ENCODE measurements at regions of chr4 and their contacts with region 1.

Region 1: DNA sequence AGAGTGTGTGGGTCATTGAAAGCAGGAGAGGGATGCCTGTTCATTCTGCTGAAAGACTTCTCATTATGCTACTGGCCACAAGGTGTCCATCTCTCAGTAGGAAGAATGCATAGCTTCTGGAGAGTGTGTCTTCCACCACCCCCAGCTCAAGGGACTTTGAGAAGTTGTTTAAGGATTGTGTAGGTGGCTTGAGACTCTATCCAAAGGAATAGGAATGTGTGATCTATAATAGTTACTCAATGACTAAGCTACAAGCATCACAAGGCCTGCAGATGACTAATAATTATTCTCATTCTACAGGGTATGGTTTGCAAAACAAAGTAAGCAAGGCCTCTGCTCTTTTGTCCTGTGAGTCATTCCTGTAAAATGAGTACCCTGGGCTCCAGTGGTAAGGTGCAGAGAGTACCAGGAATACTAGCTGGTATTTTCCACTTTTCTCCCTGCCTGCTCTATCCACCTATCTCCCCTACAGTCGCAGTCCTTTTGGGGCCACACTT is 279.8 kb upstream of the BOD1L1 start:
- DNase-seq: no peak
- ATAC-seq: peak; percentile 29
- H3K4me3 ChIP-seq: no peak overlapping the region
- H3K27ac ChIP-seq: peak overlapping the region in 1 of 2 donors; percentile 94
- H3K4me1 ChIP-seq: peaks cover 0 to 2% of the 10 kb centered on the region in 2 donors
- H3K27me3 ChIP-seq: no peaks in the 10 kb centered on the region

Region 2: GRCh38 chr4:13988353-13989305 is 81.3 kb after region 1 on chr4:
- intact Hi-C with region 1: loop called in 1 of 2 experiments (anchors 5 kb)
- DNase-seq: peak; percentile 72 to 79
- ATAC-seq: peak; percentile 89
- H3K4me3 ChIP-seq: no peak overlapping the region
- H3K27ac ChIP-seq: peak overlapping the region in 1 of 2 donors; percentile 68
- H3K4me1 ChIP-seq: peaks cover 4 to 9% of the 10 kb centered on the region in 2 donors
- H3K27me3 ChIP-seq: no peaks in the 10 kb centered on the region

Region 3: DNA sequence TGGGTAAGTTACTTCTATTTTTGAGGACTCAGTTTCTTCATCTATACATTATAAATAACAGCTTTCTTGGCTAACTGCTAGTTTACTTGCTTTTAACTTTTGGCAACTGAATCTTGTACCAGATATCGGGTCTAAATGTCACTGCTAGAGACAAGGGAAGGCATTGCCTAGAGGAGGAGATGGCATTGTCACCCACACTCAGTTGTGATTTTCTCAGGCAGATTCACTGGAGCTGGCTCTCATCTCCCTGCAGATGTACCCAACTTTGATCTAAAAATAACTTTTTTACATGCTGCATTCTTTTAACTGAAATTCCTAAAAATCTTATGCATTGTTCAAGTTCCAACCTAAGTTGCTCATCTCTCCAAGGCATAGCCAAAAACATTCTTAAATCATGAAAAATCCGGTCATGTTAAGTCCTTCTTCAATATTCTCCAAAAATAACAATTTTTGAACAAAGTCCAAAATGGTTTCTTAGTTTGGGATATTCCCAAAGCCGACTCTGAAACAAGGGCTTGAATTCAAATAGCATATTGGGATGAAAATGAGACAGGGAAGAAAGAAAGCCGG is 189.2 kb after region 1 on chr4:
- intact Hi-C with region 1: no loop called
- DNase-seq: no peak
- ATAC-seq: no peak
- H3K4me3 ChIP-seq: no peak overlapping the region
- H3K27ac ChIP-seq: no peak overlapping the region
- H3K4me1 ChIP-seq: no peaks in the 10 kb centered on the region
- H3K27me3 ChIP-seq: no peaks in the 10 kb centered on the region

Region 4: DNA sequence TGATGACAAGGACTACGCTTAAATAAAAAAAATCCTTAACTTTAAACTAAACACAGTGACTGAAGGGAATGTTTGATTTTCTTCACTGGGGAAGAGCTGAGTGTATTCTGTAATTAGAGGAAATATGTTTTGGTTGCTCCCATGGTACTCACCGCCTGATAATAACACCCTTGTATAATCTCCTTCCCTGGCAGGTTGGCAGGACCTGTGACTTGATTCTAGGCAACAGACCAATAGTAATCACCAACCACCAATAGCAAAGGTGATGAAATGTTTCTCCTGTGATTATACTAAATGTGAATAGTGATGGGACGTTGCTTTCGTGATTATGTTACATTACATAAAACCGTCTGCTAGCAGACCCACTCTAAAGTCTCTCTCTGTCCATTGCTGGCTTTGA is 558.2 kb after region 1 on chr4:
- intact Hi-C with region 1: no loop called
- DNase-seq: no peak
- ATAC-seq: no peak
- H3K4me3 ChIP-seq: no peak overlapping the region
- H3K27ac ChIP-seq: no peak overlapping the region
- H3K4me1 ChIP-seq: no peaks in the 10 kb centered on the region
- H3K27me3 ChIP-seq: no peaks in the 10 kb centered on the region

Measured in aorta (tissue), 5 donors.